Activated CD4-positive, alpha-beta T cell treated with anti-CD3 and anti-CD28 coated beads, Interleukin-2, amount 10 ng/mL, durations not matched to agents 7 days and 5 days (primary cell): ENCODE measurements at regions of chr15 and their contacts with region 1.

Region 1: GRCh38 chr15:40893733-40894688 is at the start of gene VPS18:
- DNase-seq: peak; percentile 98
- H3K4me3 Mint-ChIP-seq: peak within 1 kb of the TSS; percentile 100
- H3K27ac Mint-ChIP-seq: peak within 1 kb of the TSS; percentile 99
- H3K4me1 Mint-ChIP-seq: peaks cover 39% of the 10 kb centered on the region
- H3K27me3 Mint-ChIP-seq: peaks cover 4% of the 10 kb centered on the region
- total RNA-seq, gene VPS18: 16.2 to 16.6 TPM

Region 2: GRCh38 chr15:40847205-40847961 is 46.6 kb before region 1 on chr15:
- CTCF ChIA-PET with region 1: interaction called, 165 read pairs
- POLR2A ChIA-PET with region 1: no interaction called
- DNase-seq: no peak
- H3K4me3 Mint-ChIP-seq: no peak overlapping the region
- H3K27ac Mint-ChIP-seq: no peak overlapping the region
- H3K4me1 Mint-ChIP-seq: peaks cover 31% of the 10 kb centered on the region
- H3K27me3 Mint-ChIP-seq: peaks cover 12% of the 10 kb centered on the region

Region 3: DNA sequence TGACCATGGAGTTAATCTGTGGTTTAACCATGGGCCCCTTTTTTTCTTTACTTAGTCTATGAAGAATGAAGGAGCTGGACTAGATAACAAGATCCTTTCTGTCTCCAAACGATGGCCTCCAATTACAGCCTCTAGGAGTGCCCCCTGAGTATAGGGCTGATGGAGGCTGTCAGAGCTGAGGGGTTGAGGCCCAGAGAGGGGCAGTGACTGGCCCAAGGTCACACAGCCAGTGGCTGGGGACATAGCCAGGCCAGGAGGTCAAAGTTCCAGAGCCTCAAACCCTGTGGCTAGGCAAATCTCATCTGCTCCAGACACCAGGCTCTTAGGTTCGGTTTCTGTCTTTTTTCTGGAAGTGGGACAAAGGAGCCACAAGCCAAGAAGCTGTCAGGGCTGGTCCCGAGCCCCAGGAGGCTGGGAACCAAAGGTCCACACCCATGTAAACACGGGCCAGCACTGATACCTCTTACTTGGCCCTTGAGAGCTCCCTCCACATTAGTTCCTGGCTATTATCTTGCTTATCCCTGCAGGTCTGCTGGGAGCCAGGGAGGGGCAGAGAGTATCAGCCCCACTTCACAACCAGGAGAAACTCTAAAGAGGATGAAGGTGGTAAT is 30.2 kb before region 1 on chr15:
- CTCF ChIA-PET with region 1: interaction called, 165 read pairs
- POLR2A ChIA-PET with region 1: interaction called, 15 read pairs
- DNase-seq: no peak
- H3K4me3 Mint-ChIP-seq: no peak overlapping the region
- H3K27ac Mint-ChIP-seq: no peak overlapping the region
- H3K4me1 Mint-ChIP-seq: peaks cover 10% of the 10 kb centered on the region
- H3K27me3 Mint-ChIP-seq: peaks cover 8% of the 10 kb centered on the region

Region 4: DNA sequence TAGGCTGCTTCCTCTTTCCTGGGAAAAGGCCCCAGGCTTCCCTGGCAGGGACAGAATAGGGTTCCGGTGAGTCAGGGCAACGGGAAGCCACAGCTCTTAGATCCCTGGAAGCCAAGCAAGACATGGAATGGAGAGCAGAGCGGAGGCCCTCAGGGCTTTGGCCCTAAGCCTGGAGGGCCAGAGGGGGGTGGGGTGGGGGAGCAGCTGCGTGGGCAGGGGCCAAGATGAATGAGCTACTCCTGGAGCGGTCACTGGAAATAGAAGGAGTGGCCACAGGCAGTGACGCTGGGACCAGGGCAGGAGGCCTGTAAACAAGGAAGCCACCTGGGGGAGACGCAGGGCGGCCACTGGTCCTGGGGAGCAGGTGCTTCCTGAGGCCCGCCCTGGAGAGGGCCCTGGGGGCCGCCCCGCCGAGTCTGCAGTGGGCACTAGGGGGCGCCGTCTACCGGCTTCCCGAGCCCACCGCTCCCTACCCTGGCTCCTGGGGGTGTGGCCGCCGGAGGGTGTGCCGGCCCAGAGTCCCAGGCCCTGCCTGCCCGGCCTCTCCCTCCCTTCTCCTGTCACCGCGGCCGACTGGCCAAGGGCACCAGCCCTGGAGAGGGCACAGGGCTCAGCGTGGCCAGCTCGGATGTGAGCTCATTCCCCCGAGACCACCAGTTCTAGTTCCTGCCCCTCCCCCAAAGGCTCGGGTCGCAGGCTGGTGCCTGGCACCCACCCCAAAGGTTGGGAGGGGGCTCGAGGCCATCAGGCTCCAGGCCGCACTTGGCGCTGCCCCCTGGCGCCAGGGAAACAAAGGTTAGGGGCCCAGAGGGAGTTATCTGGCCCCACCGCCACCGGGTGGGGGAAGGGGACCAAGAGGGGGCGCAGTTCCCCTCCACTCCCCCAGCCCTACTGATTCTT is 12.3 kb after region 1 on chr15:
- CTCF ChIA-PET with region 1: interaction called, 39 read pairs
- POLR2A ChIA-PET with region 1: interaction called, 4 read pairs
- DNase-seq: peak; percentile 65
- H3K4me3 Mint-ChIP-seq: peak overlapping the region; percentile 64
- H3K27ac Mint-ChIP-seq: peak overlapping the region; percentile 86
- H3K4me1 Mint-ChIP-seq: peaks cover 49% of the 10 kb centered on the region
- H3K27me3 Mint-ChIP-seq: no peaks in the 10 kb centered on the region

Region 5: DNA sequence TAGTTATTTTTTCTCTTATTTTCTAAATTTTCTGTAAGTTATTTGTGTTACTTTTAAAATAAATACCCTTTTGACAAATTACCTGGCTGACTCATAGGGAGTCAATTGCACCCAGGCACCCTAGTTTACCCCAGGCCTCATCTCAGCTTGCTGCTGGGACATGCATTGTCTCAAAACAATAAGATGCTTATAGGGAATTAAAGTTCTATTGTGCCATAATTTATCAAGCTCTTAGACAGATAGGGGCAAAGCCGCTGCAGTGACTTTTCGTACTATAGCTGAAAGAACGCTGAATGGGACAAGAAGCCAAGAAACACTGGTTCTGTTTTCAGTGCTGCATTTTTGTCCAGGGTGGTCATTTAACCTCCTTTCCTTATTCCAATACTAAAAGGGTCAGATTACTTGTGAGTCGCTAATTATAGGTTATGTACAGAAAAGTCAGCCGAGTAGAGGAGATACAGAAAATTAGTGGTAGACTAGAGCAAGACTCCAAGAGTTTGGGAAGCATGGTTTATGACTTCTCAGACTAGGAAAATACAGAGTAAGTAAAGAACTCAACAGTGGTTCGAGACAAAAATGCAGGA is 286.3 kb after region 1 on chr15:
- CTCF ChIA-PET with region 1: interaction called, 12 read pairs
- POLR2A ChIA-PET with region 1: no interaction called
- DNase-seq: no peak
- H3K4me3 Mint-ChIP-seq: no peak overlapping the region
- H3K27ac Mint-ChIP-seq: no peak overlapping the region
- H3K4me1 Mint-ChIP-seq: peaks cover 3% of the 10 kb centered on the region
- H3K27me3 Mint-ChIP-seq: no peaks in the 10 kb centered on the region